ENCODE measurements at regions of chr12 and their contacts with region 1.

Region 1: DNA sequence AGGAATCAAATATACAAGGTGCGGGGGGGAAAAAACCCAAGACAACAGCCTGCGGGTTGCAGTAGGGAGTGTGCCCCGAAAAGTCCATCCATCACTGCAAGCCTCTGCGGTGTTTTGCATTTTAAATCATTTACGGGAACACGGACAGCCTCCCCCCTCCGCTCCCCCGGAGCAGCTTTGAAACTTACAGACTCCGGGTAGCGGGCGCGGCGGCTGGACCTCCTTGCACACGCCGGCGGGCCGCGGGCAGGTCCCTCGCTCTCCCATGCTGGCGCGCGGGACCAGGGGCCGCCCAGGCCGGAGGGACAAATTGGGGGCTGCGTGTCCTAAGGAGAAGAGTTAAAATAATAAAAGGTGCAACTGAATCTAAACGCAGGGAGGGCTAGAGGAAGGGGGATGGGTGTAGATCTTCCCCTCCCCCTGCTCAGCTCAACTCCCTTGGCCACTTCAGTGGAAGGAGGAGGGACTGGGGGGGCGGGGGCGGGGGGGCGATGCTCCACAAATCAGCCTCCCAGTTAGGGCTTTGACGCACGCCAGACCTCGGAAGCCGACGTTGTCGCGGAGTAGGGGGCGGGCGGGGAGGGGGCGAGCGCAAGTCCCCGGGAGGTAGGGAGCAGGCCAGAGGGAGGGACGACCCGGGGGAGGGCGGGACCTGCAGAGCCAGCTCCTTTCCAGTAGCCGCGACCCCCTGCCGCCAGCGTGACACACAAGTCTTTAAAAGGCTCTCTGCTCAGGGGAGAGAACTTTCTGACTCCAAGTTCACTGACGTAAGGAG is at the start of gene KCNJ8:
- DNase-seq: no peak
- H3K4me3 Mint-ChIP-seq: no peak within 1 kb of the TSS
- H3K27ac Mint-ChIP-seq: no peak within 1 kb of the TSS
- H3K4me1 Mint-ChIP-seq: peaks cover 2% of the 10 kb centered on the region
- H3K27me3 Mint-ChIP-seq: peaks cover 58% of the 10 kb centered on the region
- total RNA-seq, gene KCNJ8: not detected in 2 replicates

Region 2: GRCh38 chr12:21940549-21941505 is 166.3 kb after region 1 on chr12 and contains the start of gene ABCC9:
- intact Hi-C with region 1: loop called (anchors 5 kb)
- DNase-seq: no peak
- H3K4me3 Mint-ChIP-seq: peak within 1 kb of the TSS; percentile 51
- H3K27ac Mint-ChIP-seq: no peak within 1 kb of the TSS
- H3K4me1 Mint-ChIP-seq: peaks cover 21% of the 10 kb centered on the region
- H3K27me3 Mint-ChIP-seq: peaks cover 64% of the 10 kb centered on the region
- total RNA-seq, gene ABCC9: 0.02 and 0.07 TPM in 2 replicates